Activated CD4-positive, alpha-beta T cell treated with anti-CD3 and anti-CD28 coated beads for 36 hours (primary cell): ENCODE measurements at regions of chr5 and their contacts with region 1.

Region 1: DNA sequence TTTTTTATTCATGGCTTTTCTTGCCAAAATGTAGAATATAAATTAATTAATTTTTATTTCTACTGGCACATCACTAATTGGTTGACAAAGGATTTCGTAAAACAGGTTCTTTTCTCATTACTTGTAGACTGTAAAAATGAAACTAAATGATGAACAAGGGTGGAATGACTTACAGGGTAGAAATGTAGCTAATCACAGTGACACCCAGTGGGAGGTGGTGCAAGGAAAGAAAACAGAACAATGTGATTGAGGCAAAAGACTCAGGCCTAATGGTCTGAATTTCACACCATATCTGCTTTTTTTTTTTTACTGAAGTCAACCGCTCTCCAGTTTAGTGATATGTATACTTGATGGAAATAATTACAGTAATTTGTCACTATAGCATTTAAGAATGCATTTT is 28.9 kb downstream of the GABRG2 start:
- DNase-seq: no peak
- ATAC-seq: no peak
- H3K4me3 Mint-ChIP-seq: no peak overlapping the region
- H3K27ac Mint-ChIP-seq: no peak overlapping the region
- H3K4me1 Mint-ChIP-seq: no peaks in the 10 kb centered on the region
- H3K27me3 Mint-ChIP-seq: no peaks in the 10 kb centered on the region

Region 2: DNA sequence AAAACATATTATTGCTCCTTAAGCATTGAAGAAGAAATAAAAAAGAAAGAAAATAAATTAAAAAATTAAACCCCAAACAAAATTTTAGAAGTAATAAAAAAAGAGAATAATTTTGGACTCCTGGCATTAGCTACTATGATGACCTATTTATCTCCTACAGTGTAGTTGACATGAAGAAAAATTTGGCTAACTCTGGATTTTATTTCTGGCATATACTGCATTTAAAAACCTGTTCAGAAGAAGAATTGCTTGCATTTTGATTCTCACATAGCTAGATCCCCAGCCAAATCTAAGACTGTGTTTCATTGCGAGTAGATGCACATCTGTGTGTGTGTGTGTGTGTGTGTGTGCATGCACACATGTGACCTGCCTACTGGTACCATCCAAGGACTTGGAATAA is 59.0 kb before region 1 on chr5:
- CTCF ChIA-PET with region 1: no interaction called
- POLR2A ChIA-PET with region 1: interaction called, 13 read pairs
- intact Hi-C with region 1: no loop called
- DNase-seq: no peak
- ATAC-seq: no peak
- H3K4me3 Mint-ChIP-seq: no peak overlapping the region
- H3K27ac Mint-ChIP-seq: no peak overlapping the region
- H3K4me1 Mint-ChIP-seq: no peaks in the 10 kb centered on the region
- H3K27me3 Mint-ChIP-seq: no peaks in the 10 kb centered on the region

Region 3: GRCh38 chr5:163585206-163585605 is 1488.8 kb after region 1 on chr5:
- CTCF ChIA-PET with region 1: no interaction called
- POLR2A ChIA-PET with region 1: no interaction called
- intact Hi-C with region 1: no loop called
- DNase-seq: no peak
- ATAC-seq: no peak
- H3K4me3 Mint-ChIP-seq: no peak overlapping the region
- H3K27ac Mint-ChIP-seq: no peak overlapping the region
- H3K4me1 Mint-ChIP-seq: no peaks in the 10 kb centered on the region
- H3K27me3 Mint-ChIP-seq: peaks cover 13% of the 10 kb centered on the region